ENCODE measurements at regions of chr10 and their contacts with region 1.

Region 1: DNA sequence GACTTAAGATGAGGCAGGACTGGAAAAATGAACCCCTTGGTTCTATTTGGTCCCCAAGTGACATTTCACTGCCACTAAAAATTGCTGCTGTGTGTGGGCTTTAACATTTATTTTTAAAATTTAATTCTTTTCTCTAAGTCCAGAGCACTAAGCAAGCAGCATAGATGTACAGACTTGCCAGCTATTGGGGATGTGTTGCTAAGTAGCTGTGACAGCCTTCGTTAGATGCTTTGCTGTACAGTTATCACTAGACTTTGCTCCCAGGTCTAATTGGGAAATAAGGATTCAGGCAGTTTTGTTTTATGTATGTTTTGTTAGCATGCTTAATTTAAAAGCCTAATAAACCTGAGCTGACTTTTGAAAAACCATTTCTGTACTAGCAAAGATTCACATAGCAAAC is 51.8 kb downstream of the GBF1 start:
- DNase-seq: no peak
- H3K4me3 ChIP-seq: no peak overlapping the region
- H3K27me3 ChIP-seq: no peaks in the 10 kb centered on the region
- CTCF ChIP-seq: no peak

Region 2: GRCh38 chr10:102274062-102274461 is 23.0 kb before region 1 on chr10:
- CTCF ChIA-PET with region 1: no interaction called
- POLR2A ChIA-PET with region 1: no interaction called
- DNase-seq: no peak
- H3K4me3 ChIP-seq: no peak overlapping the region
- H3K27me3 ChIP-seq: no peaks in the 10 kb centered on the region
- CTCF ChIP-seq: no peak

Region 3: DNA sequence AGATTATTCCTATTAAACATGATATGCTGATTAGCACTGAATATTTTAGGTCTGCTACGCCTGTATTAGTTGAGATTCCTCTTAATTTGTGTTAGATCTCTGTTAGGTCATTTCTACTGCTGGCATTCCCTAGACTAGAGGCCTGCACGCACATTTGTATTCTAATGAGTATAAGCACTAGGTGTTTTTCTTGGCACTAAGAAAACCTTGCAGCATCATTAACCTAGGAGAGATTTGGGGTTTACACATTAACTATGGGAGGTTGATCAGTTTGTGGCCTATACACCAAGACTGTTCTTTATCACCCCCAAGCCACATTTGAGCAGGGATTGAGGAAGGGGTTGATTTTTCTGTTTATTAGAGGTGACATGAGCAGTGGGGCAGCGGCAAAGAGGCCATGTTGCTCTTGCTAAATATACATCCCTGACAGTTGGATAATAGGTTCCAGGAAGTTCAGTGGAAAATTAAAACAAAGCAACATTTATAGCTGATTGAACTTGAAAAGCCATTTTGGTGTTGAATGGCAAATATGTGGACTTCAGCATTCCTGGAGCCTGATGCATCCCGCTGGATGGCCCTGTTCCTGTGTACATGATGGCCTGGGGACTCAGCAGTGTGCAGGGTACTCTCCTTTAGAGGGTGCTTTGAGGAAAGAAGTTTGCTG is 13.4 kb after region 1 on chr10:
- CTCF ChIA-PET with region 1: interaction called, 11 read pairs
- POLR2A ChIA-PET with region 1: no interaction called
- DNase-seq: no peak
- H3K4me3 ChIP-seq: no peak overlapping the region
- H3K27me3 ChIP-seq: no peaks in the 10 kb centered on the region
- CTCF ChIP-seq: no peak

Region 4: DNA sequence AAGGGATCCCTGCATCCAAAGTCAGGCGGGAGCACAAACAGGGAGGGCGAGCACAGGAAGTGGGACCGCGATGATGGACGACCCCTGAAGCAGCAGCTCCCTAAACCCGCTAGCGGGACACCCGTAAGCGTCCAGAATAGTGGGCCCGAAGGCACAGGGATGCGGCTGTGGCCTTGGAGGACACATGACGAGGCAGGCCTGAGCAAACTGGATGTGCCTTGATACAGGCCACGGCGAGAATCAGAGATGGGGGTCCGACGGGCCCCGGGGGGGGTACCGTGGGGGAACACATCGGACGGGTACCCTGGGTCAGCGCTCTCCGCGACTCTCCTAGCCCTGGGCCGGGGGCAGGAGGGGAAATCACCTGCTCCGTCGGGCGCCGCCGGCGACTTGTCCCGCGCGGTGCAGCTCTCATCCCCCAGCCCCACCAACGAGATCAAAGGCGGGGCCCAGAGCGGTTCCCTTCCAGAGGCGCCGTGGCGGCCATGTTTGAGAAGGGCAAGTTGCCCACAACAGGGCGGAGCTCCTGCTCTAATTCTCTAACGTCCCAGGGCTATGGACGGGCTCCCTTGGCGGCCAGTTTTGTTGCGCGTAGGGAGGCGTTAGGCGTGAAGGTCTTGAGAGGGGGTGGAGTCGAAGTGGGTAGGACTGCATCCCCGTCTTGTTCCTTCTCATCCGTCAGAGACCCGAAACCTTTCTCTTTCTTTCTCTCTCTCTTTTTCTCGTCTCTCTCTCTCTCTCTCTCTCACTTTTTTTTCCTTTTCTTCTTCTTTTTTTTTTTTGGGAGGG is 135.3 kb after region 1 on chr10 and contains the start of gene CUEDC2:
- CTCF ChIA-PET with region 1: no interaction called
- POLR2A ChIA-PET with region 1: no interaction called
- DNase-seq: peak; percentile 59
- H3K4me3 ChIP-seq: peak within 1 kb of the TSS; percentile 83
- H3K27me3 ChIP-seq: no peaks in the 10 kb centered on the region; the same call in 1 of the 2 replicates
- CTCF ChIP-seq: 0 out of 2 replicates have a peak, but pooled peaks have one; percentile 2
- polyA plus RNA-seq, gene CUEDC2: 51.2 and 74.4 TPM in 2 replicates

Measured in BJ (cell line).